Testis (tissue), 5 donors: ENCODE measurements at regions of chr4 and their contacts with region 1.

Region 1: DNA sequence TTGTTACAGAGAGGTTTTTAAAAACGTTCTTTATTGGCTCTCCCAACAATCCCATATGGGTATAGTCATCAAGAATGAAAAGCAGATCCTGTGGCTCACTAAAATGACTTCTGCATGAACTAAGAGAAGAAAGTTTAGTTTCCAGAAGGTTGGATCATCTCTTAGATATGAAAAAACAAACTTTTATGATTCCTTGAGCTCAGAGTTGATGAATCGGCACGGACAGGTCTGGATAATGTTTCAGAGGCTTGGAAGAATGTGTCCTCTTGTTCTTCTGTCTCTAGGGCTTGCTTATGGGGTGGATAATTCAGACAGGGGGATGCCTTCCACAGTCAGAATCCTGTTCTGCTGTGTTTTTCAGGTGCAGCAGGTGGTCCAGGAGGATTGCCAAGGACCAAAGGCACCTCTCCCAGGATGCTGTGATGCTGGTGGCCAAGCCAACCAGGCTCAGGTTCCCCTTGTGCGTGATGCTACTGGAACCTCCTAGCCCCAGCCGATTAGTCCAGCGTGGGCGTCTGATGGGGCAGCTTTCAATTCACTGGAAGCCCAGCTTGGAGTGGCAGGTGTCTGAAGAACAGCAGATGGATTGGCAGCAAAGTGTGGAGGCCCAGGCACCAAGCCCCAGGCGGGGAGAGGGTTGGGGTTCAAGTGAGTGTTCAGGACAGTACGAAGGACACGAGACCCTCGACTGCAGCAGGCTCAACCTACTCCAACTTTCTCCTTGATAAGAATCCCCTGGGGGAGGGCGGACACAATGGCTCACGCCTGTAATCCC is 30.3 kb downstream of the CCKAR start:
- DNase-seq: no peak
- H3K4me3 ChIP-seq: no peak overlapping the region
- H3K27ac ChIP-seq: no peak overlapping the region
- H3K4me1 ChIP-seq: no peaks in the 10 kb centered on the region
- H3K27me3 ChIP-seq: no peaks in the 10 kb centered on the region
- CTCF ChIP-seq: no peak
- POLR2A ChIP-seq: no peak

Region 2: DNA sequence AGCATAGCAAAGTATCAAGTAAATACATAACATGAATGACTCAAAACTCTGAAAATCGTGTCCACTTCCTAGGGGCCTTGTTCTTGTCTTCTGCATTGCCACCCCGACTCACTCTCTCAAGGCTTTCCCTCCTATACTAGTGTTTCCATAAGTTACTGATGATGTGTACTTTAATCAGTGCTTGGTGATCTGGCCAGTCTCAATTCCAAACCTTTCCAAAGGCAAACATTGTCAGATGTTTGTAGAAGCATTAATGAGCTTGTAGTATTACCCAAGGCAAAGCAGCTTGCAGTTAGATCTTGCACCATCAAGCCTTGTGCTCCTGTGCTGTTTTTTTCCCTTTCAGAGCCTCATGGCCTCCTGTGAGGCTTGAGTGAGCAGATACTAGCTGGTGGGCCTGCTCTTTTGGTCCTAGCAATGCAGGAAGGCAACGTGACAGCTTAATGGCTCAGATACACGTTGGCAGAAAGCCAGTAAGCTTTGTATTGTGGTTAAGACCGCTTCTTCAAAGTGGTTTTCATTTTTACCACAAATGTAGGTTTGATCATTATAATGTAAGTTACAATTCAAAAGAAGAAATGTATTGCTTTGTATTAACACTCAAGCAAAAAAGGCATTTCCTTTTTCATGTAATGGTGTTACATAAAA is 87.3 kb before region 1 on chr4:
- intact Hi-C with region 1: no loop called
- DNase-seq: no peak
- H3K4me3 ChIP-seq: no peak overlapping the region
- H3K27ac ChIP-seq: no peak overlapping the region
- H3K4me1 ChIP-seq: no peaks in the 10 kb centered on the region
- H3K27me3 ChIP-seq: no peaks in the 10 kb centered on the region
- CTCF ChIP-seq: no peak
- POLR2A ChIP-seq: no peak

Region 3: DNA sequence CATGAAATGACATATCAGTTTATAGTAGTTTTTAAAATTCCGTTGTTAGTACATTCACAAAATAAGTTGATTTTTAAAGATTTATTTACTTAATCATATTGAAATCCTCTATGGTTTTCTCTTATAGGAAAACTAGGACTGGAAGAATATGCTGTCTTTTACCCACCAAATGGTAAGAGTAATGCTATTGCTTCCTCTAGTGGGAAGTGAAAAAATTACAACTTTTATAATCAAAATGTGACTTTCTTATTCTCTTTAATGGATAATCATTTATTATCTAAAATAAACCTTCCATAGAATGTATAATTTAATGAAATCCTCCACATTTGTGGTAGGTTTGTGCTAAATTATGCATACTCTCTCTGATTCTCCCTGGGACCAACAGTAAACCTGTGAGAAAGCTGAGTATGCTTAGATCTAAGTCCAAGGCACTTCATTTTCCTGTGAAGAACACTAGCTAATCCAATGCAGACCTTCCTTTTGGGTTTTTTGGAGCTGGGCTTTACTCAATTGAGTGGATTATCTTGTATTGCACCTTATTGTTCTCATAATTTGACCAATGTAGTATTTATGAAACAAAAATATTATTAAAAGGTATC is 260.1 kb after region 1 on chr4:
- intact Hi-C with region 1: loop called (anchors 10 kb)
- DNase-seq: no peak
- H3K4me3 ChIP-seq: no peak overlapping the region
- H3K27ac ChIP-seq: no peak overlapping the region
- H3K4me1 ChIP-seq: no peaks in the 10 kb centered on the region
- H3K27me3 ChIP-seq: no peaks in the 10 kb centered on the region
- CTCF ChIP-seq: peak in 2 of 3 experiments; percentile 19 to 73
- POLR2A ChIP-seq: no peak

Region 4: DNA sequence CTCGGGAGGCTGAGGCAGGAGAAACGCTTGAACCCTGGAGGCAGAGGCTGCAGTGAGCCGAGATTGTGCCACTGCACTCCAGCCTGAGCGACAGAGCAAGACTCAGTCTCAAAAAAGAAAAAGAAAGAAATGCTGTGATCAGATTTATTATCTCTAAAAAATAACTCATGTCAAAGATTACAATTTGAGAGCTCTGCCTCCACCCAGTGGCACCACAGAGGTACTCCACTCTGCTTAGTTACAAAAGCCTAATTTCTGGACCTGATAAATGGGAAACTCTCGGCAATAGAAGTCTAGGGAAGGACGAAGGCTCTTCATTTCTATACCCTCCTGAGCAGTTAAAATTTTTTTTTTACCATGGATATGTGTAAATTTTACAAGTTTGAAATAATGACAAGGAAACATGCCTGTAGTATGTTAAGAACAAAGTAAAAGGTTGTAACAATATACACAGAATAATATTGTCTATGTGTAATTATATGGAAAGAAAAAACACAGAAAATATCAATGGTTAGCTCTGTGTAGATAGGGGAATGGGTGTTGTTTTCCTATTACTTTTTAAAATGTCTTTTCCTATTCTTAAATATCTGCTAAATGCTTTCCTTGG is 550.5 kb after region 1 on chr4:
- intact Hi-C with region 1: loop called (anchors 10 kb)
- DNase-seq: peak; percentile 62
- H3K4me3 ChIP-seq: no peak overlapping the region
- H3K27ac ChIP-seq: no peak overlapping the region
- H3K4me1 ChIP-seq: peaks cover 4% of the 10 kb centered on the region
- H3K27me3 ChIP-seq: no peaks in the 10 kb centered on the region
- CTCF ChIP-seq: peak; percentile 70 to 89 (median 74)
- POLR2A ChIP-seq: no peak